CD8-positive, alpha-beta memory T cell (primary cell): ENCODE measurements at regions of chr9 and their contacts with region 1.

Region 1: GRCh38 chr9:126398403-126399058 is 71.9 kb downstream of the MVB12B start:
- DNase-seq: peak; percentile 52 to 80 (median 67)
- H3K4me3 ChIP-seq: no peak overlapping the region
- H3K4me3 Mint-ChIP-seq: peak overlapping the region; percentile 8 to 76 (median 65)
- H3K27ac ChIP-seq: no peak overlapping the region
- H3K27ac Mint-ChIP-seq: peak overlapping the region; percentile 80 to 98 (median 92)
- H3K4me1 ChIP-seq: peaks cover 28% of the 10 kb centered on the region
- H3K4me1 Mint-ChIP-seq: peaks cover 36 to 78% (median 50%) of the 10 kb centered on the region in 3 donors
- H3K27me3 ChIP-seq: no peaks in the 10 kb centered on the region
- H3K27me3 Mint-ChIP-seq: no peaks in the 10 kb centered on the region

Region 2: DNA sequence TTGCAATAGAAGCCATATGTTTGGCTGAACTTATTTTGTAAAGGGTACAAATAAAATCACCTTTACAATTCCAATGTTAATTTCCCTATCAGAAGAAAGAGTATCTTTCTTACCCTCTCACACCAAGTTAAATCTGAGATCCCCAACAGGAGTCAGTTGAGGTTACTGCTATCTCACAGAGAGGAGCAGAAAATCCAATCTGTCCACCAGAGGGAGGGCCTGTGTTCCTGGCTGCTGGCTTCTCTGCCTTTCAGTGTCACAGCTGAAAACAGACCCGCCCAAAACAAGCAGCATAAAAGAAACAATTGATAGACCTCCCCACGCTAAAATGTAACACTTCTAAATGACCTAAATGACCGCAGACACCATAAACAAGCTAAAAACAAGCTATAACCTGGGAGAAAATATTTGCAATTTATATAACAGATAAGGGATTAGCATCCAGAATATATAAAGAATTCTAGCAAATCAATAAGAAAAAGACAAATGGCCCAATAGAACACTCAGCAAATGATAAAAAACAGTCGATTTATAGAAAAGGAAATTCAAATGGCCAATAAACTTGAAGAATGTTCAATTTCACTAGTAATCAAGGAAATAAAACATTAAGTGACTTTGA is 96.4 kb before region 1 on chr9:
- CTCF ChIA-PET with region 1: interaction called, 89 read pairs
- POLR2A ChIA-PET with region 1: interaction called, 4 read pairs
- DNase-seq: peak; percentile 22 to 76 (median 46)
- H3K4me3 ChIP-seq: no peak overlapping the region
- H3K4me3 Mint-ChIP-seq: no peak overlapping the region
- H3K27ac ChIP-seq: no peak overlapping the region
- H3K27ac Mint-ChIP-seq: peak overlapping the region in 1 of 8 donors; percentile 7
- H3K4me1 ChIP-seq: no peaks in the 10 kb centered on the region
- H3K4me1 Mint-ChIP-seq: peaks cover 3 to 11% (median 5%) of the 10 kb centered on the region in 3 donors
- H3K27me3 ChIP-seq: no peaks in the 10 kb centered on the region
- H3K27me3 Mint-ChIP-seq: peaks cover 0 to 4% of the 10 kb centered on the region in 2 donors

Region 3: DNA sequence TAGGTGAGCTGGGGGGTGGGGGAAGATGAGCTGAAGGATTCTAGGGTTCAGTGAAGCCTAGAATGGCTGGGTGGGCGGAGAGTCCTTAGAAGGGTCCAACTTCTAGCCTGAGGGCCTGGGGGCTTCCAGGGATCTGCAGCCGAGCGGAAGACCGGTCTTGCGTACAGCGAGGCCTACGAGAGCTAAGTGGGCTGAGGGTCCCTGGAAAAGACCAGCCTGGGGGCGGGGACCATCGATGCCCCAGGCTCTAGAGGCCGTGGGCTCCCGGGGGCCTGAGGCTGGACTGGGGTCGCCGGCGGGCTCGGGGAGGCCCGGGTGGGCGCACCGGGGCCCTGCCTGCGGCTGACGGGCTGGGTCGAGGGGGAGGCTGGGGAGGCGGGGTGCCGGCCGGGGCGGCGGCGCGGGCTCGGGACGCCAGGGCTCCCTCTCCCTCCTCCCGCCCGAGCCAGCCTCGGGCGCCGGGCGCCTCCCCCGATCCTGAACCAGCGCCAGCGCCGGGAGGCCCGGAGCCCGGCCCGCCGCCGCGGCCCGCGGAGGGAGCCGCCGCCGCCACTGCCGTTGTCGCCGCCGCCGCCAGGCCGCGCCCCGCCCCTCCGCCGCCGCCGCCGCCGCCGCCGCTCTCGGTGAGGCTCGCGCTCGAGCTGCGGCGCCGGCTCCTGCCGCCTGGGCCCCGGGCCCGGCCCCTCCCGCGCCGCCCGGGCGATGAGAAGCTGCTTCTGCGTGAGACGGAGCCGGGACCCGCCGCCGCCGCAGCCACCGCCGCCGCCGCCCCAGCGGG is 72.1 kb before region 1 on chr9 and contains the start of gene MVB12B:
- CTCF ChIA-PET with region 1: interaction called, 124 read pairs
- POLR2A ChIA-PET with region 1: interaction called, 9 read pairs
- DNase-seq: peak; percentile 46 to 75 (median 64)
- H3K4me3 ChIP-seq: peak within 1 kb of the TSS; percentile 74
- H3K4me3 Mint-ChIP-seq: peak within 1 kb of the TSS; percentile 86 to 97 (median 90)
- H3K27ac ChIP-seq: peak within 1 kb of the TSS; percentile 58
- H3K27ac Mint-ChIP-seq: peak within 1 kb of the TSS; percentile 93 to 99 (median 96)
- H3K4me1 ChIP-seq: peaks cover 45% of the 10 kb centered on the region
- H3K4me1 Mint-ChIP-seq: peaks cover 43 to 52% (median 47%) of the 10 kb centered on the region in 3 donors
- H3K27me3 ChIP-seq: no peaks in the 10 kb centered on the region
- H3K27me3 Mint-ChIP-seq: no peaks in the 10 kb centered on the region
- total RNA-seq, gene MVB12B: 11.0 to 13.1 TPM

Region 4: DNA sequence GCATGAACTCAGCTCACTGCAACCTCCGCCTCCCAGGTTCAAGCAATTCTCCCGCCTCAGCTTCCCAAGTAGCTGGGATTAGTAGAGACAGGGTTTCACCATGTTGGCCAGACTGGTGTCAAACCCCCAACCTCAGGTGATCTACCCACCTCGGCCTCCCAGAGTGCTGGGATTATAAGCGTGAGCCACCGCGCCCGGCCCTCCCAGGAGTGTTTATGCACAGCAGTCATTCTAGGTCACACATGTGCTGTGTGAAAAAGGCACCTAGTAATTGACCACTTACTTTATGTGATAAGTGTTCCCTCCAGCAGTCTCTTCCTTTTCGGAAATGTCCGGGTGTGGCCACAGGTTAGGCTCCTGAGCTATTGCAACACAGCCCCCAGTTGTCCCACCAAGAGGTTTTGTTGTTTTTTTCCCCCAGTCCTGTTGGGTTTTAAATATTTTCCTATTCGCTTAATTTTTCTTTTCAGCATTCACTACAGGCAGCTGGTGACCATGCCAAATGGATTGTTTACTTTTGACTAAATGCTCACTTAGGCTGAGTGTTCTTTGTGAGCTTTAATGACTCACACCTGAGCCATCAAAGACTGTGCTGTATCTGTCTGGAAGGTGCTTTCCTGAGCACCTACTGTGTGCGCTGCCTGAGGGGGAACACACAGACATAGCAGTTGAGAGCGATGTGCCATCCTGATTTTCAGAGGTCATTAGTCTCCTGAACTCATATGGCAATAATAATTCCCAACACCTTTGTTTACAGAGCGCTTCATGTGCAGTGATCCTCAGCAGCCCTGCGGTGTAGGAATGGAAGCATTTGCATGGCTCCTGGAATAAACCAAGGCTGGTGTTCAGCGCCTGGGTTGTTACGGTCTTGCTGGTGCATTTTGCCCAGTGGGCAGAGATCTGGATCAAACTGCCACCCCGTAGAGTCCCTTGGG is 22.4 kb after region 1 on chr9:
- CTCF ChIA-PET with region 1: interaction called, 10 read pairs
- POLR2A ChIA-PET with region 1: no interaction called
- DNase-seq: no peak
- H3K4me3 ChIP-seq: no peak overlapping the region
- H3K4me3 Mint-ChIP-seq: no peak overlapping the region
- H3K27ac ChIP-seq: no peak overlapping the region
- H3K27ac Mint-ChIP-seq: peak overlapping the region in 1 of 8 donors; percentile 44
- H3K4me1 ChIP-seq: peaks cover 18% of the 10 kb centered on the region
- H3K4me1 Mint-ChIP-seq: peaks cover 11 to 38% (median 18%) of the 10 kb centered on the region in 3 donors
- H3K27me3 ChIP-seq: no peaks in the 10 kb centered on the region
- H3K27me3 Mint-ChIP-seq: peaks cover 0 to 1% of the 10 kb centered on the region in 2 donors

Region 5: DNA sequence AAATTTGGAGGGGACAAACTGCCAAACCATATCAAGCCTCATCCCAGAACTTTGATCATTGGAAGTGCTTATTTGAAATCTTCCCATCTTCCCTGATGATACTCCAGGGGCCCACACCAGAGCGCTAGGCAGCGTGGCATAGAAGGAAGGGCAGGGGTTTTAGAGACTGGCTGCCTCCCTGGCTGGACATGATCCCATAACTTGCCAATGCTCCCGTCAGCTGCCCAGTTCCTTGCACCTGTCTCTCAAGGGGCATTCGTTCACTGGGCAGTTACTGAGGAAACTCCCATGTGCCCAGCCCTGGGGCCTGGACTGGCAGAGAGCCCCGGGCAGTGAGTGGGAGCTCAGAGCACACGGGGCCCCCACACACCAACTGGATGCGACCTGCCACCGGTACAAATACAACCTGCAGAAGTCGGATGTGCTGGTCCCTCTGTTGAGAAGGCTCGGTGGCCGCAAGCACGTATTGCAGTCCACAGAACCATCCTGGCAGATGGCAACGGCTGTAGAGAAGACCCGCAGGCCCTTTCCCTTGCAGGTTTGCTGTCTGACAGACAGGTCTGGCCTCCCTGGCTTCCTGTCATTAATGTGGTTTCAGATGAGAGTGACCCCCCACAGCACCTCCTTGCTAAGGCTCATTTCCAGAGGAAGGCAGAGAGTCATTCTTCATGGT is 50.5 kb after region 1 on chr9:
- CTCF ChIA-PET with region 1: no interaction called
- POLR2A ChIA-PET with region 1: no interaction called
- DNase-seq: no peak
- H3K4me3 ChIP-seq: no peak overlapping the region
- H3K4me3 Mint-ChIP-seq: no peak overlapping the region
- H3K27ac ChIP-seq: no peak overlapping the region
- H3K27ac Mint-ChIP-seq: peak overlapping the region in 1 of 8 donors; percentile 47
- H3K4me1 ChIP-seq: no peaks in the 10 kb centered on the region
- H3K4me1 Mint-ChIP-seq: peaks cover 23 to 65% (median 27%) of the 10 kb centered on the region in 3 donors
- H3K27me3 ChIP-seq: no peaks in the 10 kb centered on the region
- H3K27me3 Mint-ChIP-seq: no peaks in the 10 kb centered on the region

Region 6: DNA sequence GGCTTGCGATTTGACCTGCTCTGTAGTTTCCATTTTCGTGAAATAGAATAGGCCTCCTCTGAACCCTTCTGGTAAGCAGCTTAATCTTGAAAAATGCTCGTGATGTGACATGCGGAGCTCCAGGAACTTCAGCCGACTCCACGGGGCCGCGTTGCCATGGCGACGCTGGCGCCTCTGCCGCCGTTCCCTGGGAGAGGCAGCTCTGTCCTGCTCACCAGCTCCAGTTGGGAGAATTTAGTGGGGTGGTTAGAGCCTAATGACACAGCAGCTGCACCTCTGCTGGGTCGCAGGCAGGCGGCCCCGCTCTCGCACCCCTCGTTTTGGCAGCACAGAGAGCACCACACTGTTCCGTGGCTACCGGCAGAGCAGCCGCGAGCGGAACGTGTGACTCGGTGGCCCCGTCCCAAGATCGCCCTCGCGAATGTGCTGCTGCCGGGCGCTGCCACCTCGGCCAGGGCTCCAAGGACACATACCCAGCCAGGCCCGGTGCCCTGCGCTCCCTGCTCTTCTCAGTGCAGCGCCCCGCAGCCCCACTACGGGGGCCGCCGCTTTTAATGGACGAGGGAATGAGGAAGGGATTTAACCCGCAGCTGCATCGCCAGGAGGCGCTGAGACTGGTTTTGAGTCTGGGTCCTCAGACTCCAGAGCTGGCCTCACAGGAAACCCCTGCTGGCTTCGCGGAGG is 84.0 kb after region 1 on chr9:
- CTCF ChIA-PET with region 1: interaction called, 11 read pairs
- POLR2A ChIA-PET with region 1: no interaction called
- DNase-seq: no peak
- H3K4me3 ChIP-seq: no peak overlapping the region
- H3K4me3 Mint-ChIP-seq: no peak overlapping the region
- H3K27ac ChIP-seq: no peak overlapping the region
- H3K27ac Mint-ChIP-seq: no peak overlapping the region
- H3K4me1 ChIP-seq: peaks cover 14% of the 10 kb centered on the region
- H3K4me1 Mint-ChIP-seq: peaks cover 13 to 43% (median 27%) of the 10 kb centered on the region in 3 donors
- H3K27me3 ChIP-seq: no peaks in the 10 kb centered on the region
- H3K27me3 Mint-ChIP-seq: no peaks in the 10 kb centered on the region